Head of caudate nucleus (tissue), 42 donors: ENCODE measurements at regions of chr18 and their contacts with region 1.

Region 1: DNA sequence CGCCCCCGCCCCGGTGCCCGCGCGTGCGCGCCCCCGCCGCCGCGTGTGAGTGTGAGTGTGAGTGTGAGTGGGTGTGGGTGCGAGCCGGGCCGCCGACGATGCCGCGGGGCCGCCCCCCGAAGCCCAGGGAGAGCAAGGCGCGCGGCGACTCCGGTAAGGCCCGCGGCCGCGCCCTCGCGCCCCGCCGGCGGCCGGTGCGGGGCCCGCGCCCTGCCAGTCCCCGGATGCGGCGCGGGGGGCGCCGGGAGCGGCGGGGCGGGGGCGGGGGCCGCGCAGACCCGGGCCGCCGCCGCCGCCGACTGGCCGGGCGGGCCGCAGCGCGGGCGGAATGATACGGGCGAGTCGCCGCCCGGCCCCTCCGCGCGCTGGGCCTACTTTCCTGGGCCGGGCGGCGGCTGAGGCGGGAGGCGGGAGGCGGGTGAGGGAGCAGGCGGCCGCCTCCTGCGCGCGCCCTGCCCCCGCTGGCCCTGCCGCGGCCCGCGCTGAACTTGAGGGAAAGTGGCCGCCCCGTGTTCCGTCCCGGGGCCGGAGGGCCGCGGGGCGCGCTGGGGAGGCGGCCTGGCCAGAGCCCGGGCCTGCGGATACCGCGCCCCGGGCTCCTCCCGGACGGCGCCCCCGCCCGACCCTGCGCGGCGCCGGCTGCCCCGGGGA is at the start of gene ZNF236:
- DNase-seq: peak in 39 of 42 donors; percentile 28 to 84 (median 69)

Region 2: DNA sequence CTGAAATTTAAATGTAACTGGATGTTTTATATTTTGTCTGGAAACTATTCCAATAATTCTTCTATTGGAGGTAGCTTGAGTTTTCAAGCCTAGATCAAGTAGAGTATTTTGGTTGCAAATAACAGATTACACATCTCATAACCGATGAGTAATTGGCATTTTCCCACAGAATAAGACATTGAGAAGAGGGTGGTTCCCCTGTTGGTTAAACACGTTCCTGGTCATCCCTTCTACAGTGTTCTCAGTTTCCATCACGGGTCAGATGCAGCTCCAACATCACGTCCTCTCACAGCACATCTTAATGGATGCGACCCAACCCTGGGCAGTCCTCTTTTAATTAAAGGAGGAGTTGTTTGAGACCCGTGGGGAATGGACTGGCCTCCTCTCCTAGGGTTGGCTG is 178.6 kb before region 1 on chr18:
- intact Hi-C with region 1: no loop called
- DNase-seq: no peak

Region 3: DNA sequence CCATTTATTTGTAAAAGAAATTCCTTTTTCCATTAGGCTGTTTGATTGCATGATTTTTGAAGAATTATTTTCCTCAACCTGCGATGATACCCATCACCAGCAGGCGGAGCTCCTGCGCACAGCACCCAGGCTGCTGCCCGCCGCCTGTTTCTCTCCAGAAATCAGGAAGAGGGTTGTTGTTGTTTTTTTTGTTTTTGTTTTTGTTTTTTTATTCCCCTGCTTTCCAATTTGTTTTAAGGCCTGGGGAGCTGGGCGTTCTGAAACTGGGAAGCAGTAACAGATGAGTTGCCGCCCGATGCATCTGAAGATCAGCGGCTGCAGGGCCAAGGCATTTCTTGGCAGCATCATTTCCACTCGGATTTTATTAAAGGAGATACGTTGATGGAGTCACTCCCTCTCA is 177.9 kb after region 1 on chr18:
- intact Hi-C with region 1: loop called (anchors 10 kb)
- DNase-seq: peak in 32 of 42 donors; percentile 25 to 88 (median 72)